Activated CD4-positive, alpha-beta T cell treated with anti-CD3 and anti-CD28 coated beads for 36 hours (primary cell): ENCODE measurements at regions of chr2 and their contacts with region 1.

Region 1: GRCh38 chr2:44361330-44362206 is at the starts of genes CAMKMT and PREPL:
- DNase-seq: peak; percentile 99
- ATAC-seq: peak; percentile 85
- H3K4me3 Mint-ChIP-seq: peak within 1 kb of the TSS; percentile 92
- H3K27ac Mint-ChIP-seq: peak within 1 kb of the TSS; percentile 100
- H3K4me1 Mint-ChIP-seq: peaks cover 48% of the 10 kb centered on the region
- H3K27me3 Mint-ChIP-seq: no peaks in the 10 kb centered on the region
- total RNA-seq, gene CAMKMT: 10.8 to 13.3 TPM
- total RNA-seq, gene PREPL: 31.5 to 38.6 TPM

Region 2: GRCh38 chr2:43595603-43596412 is 765.8 kb before region 1 on chr2 and contains the start of gene THADA:
- CTCF ChIA-PET with region 1: no interaction called
- POLR2A ChIA-PET with region 1: no interaction called
- intact Hi-C with region 1: loop called in 1 of 2 experiments (anchors 1 kb)
- DNase-seq: peak; percentile 99
- ATAC-seq: peak; percentile 97
- H3K4me3 Mint-ChIP-seq: peak within 1 kb of the TSS; percentile 89
- H3K27ac Mint-ChIP-seq: peak within 1 kb of the TSS; percentile 98
- H3K4me1 Mint-ChIP-seq: peaks cover 34% of the 10 kb centered on the region
- H3K27me3 Mint-ChIP-seq: peaks cover 2% of the 10 kb centered on the region
- total RNA-seq, gene THADA: 32.5 to 36.6 TPM

Region 3: GRCh38 chr2:43995733-43996533 is 365.6 kb before region 1 on chr2 and contains the start of gene LRPPRC:
- CTCF ChIA-PET with region 1: no interaction called
- POLR2A ChIA-PET with region 1: no interaction called
- intact Hi-C with region 1: loop called (anchors 1 kb)
- DNase-seq: peak; percentile 95
- ATAC-seq: peak; percentile 97
- H3K4me3 Mint-ChIP-seq: peak within 1 kb of the TSS; percentile 81
- H3K27ac Mint-ChIP-seq: peak within 1 kb of the TSS; percentile 92
- H3K4me1 Mint-ChIP-seq: peaks cover 36% of the 10 kb centered on the region
- H3K27me3 Mint-ChIP-seq: no peaks in the 10 kb centered on the region
- total RNA-seq, gene LRPPRC: 189 to 191 TPM

Region 4: GRCh38 chr2:44009135-44009735 is 352.3 kb before region 1 on chr2:
- CTCF ChIA-PET with region 1: no interaction called
- POLR2A ChIA-PET with region 1: no interaction called
- intact Hi-C with region 1: no loop called
- DNase-seq: no peak
- ATAC-seq: no peak
- H3K4me3 Mint-ChIP-seq: no peak overlapping the region
- H3K27ac Mint-ChIP-seq: no peak overlapping the region
- H3K4me1 Mint-ChIP-seq: peaks cover 10% of the 10 kb centered on the region
- H3K27me3 Mint-ChIP-seq: peaks cover 13% of the 10 kb centered on the region

Region 5: DNA sequence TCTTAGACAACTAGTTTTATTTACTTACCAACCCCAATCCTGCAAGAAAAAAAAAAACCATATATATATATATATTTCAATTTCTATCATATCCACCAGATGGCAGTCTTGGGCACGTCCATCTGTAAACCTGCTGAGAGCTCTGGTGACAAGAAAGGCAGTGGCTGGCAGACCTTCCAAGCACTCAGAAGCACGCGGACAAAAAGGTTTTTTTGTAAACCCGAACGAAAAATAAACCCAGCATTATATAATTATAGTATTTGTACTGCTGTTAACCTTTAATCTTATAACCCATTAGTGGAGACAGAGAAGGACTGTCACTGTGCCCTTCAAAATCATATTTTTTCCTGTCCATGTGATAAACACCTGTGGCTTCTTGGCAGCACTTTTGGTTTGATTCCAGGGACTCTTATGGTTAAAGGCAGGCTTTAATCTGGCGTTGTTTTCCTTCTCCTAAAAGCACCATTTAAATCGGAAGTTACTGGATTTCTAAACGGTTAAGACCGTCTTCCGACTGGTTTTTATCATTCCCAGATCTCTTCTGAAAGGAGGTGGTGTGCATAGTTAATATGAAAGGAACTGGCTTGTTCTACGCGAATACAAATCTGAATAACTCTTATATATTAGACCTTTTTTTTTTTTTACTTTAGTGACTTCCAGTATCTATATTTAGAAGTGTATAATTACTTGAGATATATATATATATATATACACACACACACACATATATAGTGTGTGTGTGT is 117.3 kb before region 1 on chr2:
- CTCF ChIA-PET with region 1: no interaction called
- POLR2A ChIA-PET with region 1: no interaction called
- intact Hi-C with region 1: loop called in 1 of 2 experiments (anchors 10 kb)
- DNase-seq: peak; percentile 73
- ATAC-seq: peak; percentile 86
- H3K4me3 Mint-ChIP-seq: peak overlapping the region; percentile 67
- H3K27ac Mint-ChIP-seq: peak overlapping the region; percentile 47
- H3K4me1 Mint-ChIP-seq: peaks cover 16% of the 10 kb centered on the region
- H3K27me3 Mint-ChIP-seq: no peaks in the 10 kb centered on the region

Region 6: DNA sequence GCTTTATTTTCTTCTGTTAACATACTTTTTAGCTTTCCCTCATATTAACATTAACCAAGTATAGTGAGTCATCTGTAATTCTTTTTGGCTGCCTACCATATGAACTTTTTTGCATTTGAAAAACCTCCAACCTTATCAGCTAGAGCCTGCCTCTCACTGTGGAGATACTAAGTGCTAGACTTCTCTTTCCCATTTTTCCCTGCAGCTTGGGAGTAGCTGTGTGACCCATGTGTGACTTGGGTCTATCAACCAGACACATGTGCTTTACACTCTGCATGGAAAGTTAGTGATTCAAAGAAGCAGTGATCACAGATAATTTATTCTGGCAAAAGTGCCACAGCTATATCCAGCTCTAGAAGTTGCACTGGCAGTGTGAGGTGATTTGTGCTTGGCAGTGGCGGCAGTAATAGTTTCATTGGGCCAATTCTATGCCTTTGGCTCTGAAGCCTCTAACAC is 36.6 kb before region 1 on chr2:
- CTCF ChIA-PET with region 1: no interaction called
- POLR2A ChIA-PET with region 1: no interaction called
- intact Hi-C with region 1: no loop called
- DNase-seq: no peak
- ATAC-seq: no peak
- H3K4me3 Mint-ChIP-seq: no peak overlapping the region
- H3K27ac Mint-ChIP-seq: no peak overlapping the region
- H3K4me1 Mint-ChIP-seq: peaks cover 3% of the 10 kb centered on the region
- H3K27me3 Mint-ChIP-seq: no peaks in the 10 kb centered on the region

Region 7: DNA sequence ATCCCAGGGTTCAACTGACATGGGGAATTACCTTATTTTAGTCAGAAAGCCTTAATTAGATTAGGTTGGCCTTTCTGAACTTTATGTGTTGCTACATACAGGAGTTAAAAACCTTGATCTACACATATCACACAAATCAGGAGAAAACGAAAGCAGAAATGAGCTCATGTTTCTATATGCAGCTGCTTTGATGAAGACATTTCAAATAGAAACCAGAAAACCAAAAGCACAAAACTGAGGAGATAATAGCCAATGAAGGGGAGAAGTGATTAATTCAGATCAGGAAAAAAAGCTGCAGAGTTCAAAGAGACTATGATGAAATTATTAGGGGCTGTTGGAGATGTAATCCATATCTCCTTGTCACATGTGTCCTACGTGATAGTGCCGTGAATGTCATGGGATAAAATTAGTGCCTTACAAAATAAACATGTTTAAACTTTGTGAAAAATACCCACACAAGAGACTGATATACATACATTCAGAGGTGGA is 255.1 kb after region 1 on chr2:
- CTCF ChIA-PET with region 1: no interaction called
- POLR2A ChIA-PET with region 1: no interaction called
- intact Hi-C with region 1: loop called in 1 of 2 experiments (anchors 2 kb)
- DNase-seq: no peak
- ATAC-seq: peak; percentile 96
- H3K4me3 Mint-ChIP-seq: no peak overlapping the region
- H3K27ac Mint-ChIP-seq: no peak overlapping the region
- H3K4me1 Mint-ChIP-seq: peaks cover 13% of the 10 kb centered on the region
- H3K27me3 Mint-ChIP-seq: no peaks in the 10 kb centered on the region

Region 8: DNA sequence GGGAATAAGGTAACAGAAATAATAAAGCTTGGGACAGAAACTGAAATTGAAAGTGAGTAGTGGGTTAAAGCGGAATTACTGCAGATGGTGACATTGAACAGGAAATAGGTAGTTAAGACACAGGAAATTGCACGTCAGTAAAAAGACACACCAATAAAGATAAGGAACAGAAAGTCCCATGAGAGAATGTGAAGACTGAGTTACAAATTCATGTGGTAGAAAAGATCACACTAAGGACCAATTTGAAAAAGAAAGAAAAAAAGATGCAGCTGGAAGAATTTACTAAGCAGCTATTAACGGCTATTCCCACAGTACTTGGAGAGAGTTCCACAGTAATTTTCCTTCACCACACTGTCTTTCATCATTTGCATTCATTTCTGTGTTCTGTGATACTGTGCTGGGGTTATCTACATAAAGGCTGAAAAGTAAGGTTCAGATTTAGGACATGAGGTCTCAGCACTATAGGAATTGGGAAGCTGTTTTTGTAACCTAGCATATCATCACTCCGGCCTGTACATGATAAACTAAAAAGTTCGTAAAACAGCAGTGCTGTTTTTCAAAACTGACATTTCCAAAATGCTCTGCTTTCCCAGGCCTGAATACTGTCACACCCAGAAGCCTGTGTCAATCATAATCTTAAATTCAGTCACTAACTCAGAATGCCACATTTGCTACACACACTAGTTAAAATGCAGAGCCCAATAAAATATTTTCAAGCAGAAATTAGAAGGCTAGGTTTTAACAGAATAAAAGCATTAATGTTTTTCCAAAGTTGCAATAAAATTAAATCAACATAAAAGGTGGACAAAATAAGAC is 1206.6 kb after region 1 on chr2:
- CTCF ChIA-PET with region 1: no interaction called
- POLR2A ChIA-PET with region 1: no interaction called
- intact Hi-C with region 1: loop called in 1 of 2 experiments (anchors 10 kb)
- DNase-seq: no peak
- ATAC-seq: peak; percentile 97
- H3K4me3 Mint-ChIP-seq: peak overlapping the region; percentile 60
- H3K27ac Mint-ChIP-seq: peak overlapping the region; percentile 91
- H3K4me1 Mint-ChIP-seq: peaks cover 16% of the 10 kb centered on the region
- H3K27me3 Mint-ChIP-seq: no peaks in the 10 kb centered on the region

Region 9: DNA sequence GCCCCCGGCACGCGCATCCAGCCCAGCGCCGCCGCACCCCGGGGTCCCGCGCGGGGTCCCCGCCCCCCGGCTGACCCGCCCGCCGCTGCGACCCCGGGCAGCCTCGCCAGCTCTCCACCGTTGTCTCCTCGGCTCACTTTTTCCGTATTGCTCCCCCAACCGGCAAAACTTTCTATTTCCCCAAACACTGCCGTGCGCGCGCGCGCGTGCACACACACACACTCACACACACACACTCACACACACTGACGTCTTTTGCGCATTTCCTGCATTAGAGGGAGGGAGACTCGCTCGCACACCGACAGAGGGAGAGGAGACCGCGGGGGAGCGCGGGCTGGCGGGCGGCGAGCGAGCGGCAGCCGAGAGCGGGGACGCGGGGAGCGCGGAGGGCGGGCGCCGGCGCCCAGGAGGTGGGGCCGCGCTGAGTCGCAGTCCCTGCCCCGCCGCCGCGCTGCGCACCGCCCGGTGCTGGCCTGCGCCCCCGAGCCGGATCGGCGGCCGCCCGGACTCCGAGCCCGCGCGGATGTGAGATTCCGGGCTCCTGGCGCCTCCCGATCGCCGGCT is 1289.4 kb after region 1 on chr2:
- CTCF ChIA-PET with region 1: no interaction called
- POLR2A ChIA-PET with region 1: no interaction called
- intact Hi-C with region 1: loop called in 1 of 2 experiments (anchors 2 kb)
- DNase-seq: peak; percentile 94
- ATAC-seq: peak; percentile 85
- H3K4me3 Mint-ChIP-seq: peak overlapping the region; percentile 87
- H3K27ac Mint-ChIP-seq: peak overlapping the region; percentile 96
- H3K4me1 Mint-ChIP-seq: peaks cover 27% of the 10 kb centered on the region
- H3K27me3 Mint-ChIP-seq: peaks cover 6% of the 10 kb centered on the region

Region 10: DNA sequence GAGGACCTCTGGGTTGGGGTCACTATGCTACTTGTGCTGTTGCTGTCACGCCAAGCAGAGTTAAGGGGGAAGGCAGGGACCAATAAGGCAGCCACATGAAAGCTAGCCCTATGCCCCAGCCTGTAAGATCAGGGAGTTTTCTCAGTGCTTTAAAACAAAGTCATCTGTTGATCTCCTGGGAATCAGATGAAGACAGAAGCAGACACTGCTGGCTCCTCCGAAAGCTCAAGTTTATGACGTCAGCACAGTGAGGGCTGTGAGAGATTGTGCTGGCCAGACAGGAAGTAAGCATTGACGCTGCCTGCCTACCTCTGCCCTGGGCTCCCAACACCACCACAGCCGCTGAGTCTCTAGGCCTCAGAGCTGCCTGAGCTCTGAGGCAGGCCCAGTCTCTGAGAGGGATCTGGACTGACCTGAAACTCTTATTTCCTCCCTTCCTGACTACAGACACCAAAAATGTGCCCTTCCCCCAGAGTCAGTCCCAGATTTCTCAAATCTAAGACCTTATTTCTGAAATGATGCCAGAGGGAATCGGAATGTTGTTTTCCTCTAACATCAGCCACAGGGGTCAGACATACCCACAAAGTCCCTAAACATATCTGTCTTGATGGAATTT is 1817.6 kb after region 1 on chr2:
- CTCF ChIA-PET with region 1: no interaction called
- POLR2A ChIA-PET with region 1: no interaction called
- intact Hi-C with region 1: no loop called
- DNase-seq: peak; percentile 75
- ATAC-seq: peak; percentile 100
- H3K4me3 Mint-ChIP-seq: no peak overlapping the region
- H3K27ac Mint-ChIP-seq: peak overlapping the region; percentile 84
- H3K4me1 Mint-ChIP-seq: peaks cover 13% of the 10 kb centered on the region
- H3K27me3 Mint-ChIP-seq: no peaks in the 10 kb centered on the region